OCI-LY7 (cell line): ENCODE measurements at regions of chr11 and their contacts with region 1.

Region 1: DNA sequence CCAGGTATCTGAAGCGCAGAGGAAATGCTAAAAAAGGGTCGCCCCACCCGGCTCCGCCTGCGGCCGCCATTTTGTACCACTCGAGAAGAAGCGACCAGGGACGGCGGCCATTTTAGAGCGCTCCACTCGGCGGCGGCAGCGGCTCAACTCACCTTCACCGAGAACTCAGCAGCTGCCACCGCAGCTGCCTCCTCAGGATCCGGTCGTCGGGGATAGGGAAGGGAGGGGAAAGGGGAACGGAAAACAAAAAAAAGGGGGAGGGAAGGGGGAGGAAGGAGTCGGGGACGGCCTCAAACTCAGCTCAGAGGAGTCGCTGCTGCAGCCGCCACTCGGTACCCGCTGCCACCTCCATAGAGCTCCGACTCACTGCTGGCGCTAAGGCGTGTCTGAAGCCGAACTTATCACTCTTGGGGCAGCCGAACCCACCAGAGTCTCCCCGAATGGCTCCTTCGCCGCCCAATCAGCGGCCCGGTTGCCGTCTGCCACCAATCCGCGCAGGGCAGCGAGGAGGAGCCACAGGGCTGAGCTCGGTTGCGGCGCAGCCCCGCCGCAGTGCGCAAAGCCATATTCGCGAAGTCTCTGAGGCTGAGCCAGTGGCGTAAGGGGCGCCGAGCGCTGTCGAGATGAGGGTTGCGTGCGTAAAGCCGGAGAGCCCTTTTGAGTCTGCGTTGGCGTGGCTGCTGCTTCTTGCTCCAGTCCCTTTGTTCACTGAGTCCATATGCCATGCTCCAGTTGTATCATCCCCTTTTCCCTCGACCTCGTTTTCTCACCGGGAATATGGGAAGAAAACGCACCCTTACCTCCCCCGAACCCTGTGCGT is at the start of gene EIF4G2:
- DNase-seq: peak; percentile 98
- H3K4me3 ChIP-seq: peak within 1 kb of the TSS; percentile 94
- H3K27ac ChIP-seq: peak within 1 kb of the TSS; percentile 87
- H3K4me1 ChIP-seq: peaks cover 40% of the 10 kb centered on the region
- CTCF ChIP-seq: no peak
- total RNA-seq, gene EIF4G2: 312 and 317 TPM in 2 replicates

Region 2: DNA sequence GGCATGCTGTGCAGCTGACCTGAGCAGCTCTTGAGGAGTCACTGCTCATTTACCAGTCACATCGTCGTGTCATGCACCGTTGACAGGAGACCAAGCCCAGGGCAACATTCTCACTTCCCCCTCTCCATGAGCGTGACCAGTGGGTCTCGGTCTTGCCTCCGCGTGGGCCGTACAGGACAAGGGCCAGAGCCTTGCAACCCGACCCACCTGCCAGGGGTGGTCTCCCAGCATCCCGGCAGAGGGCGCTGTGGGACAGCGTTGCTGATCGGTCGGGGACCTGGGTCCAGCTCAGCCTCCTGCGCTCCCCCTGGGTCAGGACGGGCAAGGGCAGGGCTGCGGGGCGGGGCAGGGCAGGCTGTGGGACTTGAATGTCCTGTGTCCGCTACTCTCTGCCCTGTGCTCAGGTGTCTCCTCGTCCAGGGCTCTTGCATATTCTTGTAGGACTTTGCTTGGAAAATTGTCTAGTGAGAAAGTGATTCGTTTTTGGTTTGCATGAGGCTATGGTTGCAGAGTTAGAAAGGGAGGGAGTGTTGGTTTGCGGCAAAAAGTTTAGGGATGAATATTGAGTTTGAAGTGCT is 16.3 kb before region 1 on chr11:
- CTCF ChIA-PET with region 1: no interaction called
- POLR2A ChIA-PET with region 1: interaction called, 14 read pairs
- intact Hi-C with region 1: no loop called
- DNase-seq: peak; percentile 82
- H3K4me3 ChIP-seq: no peak overlapping the region
- H3K27ac ChIP-seq: no peak overlapping the region
- H3K4me1 ChIP-seq: no peaks in the 10 kb centered on the region
- CTCF ChIP-seq: peak; percentile 88

Region 3: DNA sequence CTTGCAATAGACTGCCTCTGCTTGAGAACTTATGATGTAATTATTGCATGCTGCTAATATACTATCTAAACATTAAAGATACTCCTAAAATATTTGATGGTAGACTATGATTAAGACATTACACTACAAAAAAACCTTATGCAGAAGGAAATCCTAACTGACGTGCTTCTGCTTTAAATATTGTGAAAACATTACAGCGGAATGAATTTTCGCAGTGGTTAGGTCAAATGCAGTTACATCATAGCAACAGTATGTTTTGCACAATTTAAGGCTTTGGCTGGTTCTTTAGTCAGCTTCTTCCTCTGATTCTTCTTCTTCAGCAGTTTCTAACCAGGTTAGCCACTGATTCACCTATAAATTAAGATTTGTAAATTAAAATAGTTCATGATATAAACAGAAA is 11.2 kb before region 1 on chr11:
- CTCF ChIA-PET with region 1: no interaction called
- POLR2A ChIA-PET with region 1: interaction called, 22 read pairs
- intact Hi-C with region 1: no loop called
- DNase-seq: no peak
- H3K4me3 ChIP-seq: no peak overlapping the region
- H3K27ac ChIP-seq: no peak overlapping the region
- H3K4me1 ChIP-seq: no peaks in the 10 kb centered on the region
- CTCF ChIP-seq: no peak

Region 4: GRCh38 chr11:10824888-10825287 is 16.1 kb after region 1 on chr11:
- CTCF ChIA-PET with region 1: interaction called, 4 read pairs
- POLR2A ChIA-PET with region 1: interaction called, 25 read pairs
- intact Hi-C with region 1: no loop called
- DNase-seq: peak; percentile 48
- H3K4me3 ChIP-seq: no peak overlapping the region
- H3K27ac ChIP-seq: no peak overlapping the region
- H3K4me1 ChIP-seq: peaks cover 9% of the 10 kb centered on the region
- CTCF ChIP-seq: no peak

Region 5: DNA sequence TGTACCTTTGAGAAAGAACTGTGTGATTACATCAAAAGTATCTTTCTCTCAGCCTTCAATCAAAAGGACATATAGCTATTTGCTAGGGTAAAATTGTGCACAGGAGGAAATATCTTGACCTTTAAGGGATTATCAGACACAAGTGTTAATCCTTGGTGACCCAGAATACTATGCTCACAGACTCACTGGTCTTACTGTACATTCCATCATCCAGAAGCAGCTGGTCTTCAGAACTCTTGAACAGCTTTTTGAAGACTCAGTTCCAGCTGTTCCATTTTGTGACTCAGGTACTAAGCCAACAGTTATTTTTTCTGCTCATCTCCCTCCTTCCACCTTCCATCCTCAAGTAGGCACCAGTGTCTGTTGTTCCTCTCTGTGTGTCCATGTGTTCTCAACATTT is 29.3 kb after region 1 on chr11:
- CTCF ChIA-PET with region 1: no interaction called
- POLR2A ChIA-PET with region 1: interaction called, 17 read pairs
- intact Hi-C with region 1: no loop called
- DNase-seq: no peak
- H3K4me3 ChIP-seq: no peak overlapping the region
- H3K27ac ChIP-seq: no peak overlapping the region
- H3K4me1 ChIP-seq: peaks cover 5% of the 10 kb centered on the region
- CTCF ChIP-seq: no peak

Region 6: DNA sequence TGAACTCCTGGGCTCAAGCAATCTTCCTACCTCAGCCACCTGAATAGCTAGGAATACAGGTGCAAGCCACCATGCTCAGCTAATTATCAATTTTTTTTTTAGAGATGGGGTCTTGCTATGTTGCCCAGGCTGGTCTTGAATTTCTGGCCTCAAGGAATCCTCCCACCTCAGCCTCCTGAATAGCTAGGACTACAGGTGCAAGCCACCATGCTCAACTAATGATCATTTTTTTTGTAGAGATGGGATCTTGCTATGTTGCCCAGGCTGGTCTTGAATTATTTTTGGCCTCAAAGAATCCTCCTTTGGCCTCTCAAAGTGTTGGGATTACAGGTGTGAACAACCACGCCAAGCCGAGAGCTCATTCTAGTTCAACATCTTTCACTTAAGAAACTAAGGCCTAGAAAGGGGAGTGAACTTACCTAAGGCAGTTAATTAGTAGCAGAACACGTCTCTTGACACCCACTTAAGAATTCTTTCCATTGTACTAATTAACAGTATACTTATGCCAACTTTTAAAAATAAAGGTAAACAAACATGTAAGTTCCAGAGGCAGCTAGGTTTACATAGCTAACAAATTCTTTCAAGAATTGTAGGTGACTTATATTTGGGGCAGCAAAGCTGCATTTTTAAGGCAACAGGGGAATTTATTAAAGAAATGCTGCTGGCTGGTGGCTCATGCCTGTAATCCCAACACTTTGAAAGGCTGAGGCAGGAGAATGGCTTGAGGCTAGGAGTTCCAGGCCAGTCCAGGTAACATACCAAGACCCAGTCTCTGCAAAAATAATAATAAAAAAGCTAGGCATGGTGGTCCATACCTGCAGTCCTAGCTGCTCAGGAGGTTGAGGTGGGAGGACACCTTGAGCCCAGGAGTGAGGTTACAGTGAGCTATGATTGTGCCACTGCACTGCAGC is 39.5 kb after region 1 on chr11:
- CTCF ChIA-PET with region 1: interaction called, 3 read pairs
- POLR2A ChIA-PET with region 1: interaction called, 15 read pairs
- intact Hi-C with region 1: no loop called
- DNase-seq: no peak
- H3K4me3 ChIP-seq: no peak overlapping the region
- H3K27ac ChIP-seq: no peak overlapping the region
- H3K4me1 ChIP-seq: no peaks in the 10 kb centered on the region
- CTCF ChIP-seq: no peak

Region 7: DNA sequence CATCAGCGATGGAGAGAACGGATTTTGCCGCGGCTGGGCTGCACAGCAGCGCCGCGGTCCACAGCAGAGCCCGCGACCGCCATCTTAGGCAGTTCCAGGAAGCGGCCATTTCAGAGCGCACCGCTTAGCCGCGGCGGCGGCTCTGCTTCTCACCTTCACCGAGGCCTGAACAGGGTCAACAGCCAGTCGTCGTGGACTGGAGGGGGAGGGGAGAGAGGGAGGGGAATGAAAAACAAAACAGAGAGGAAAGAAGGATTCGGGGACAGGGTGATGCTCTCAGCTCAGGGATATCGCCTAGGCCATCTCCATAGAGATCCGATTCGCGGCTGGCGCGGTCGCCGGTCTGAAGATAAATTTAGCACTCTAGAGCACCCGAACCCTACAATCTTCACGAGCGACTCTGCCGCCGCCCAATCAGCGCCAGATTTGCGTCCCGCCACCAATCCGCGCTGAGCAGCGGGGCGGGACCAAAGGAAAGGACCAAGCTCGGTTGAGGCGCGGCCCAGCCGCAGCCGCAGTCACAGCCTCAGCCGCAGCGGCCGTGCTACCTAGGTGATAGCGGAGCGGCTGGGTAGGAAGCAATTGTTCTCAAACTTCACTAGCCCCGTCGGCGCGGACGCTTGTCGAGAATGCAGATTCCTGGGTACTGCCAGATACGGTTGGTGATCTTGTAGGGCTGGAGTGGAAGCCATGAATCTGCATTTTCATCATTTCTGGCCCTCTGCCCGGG is 49.1 kb after region 1 on chr11 and contains the start of gene ZBED5:
- CTCF ChIA-PET with region 1: interaction called, 6 read pairs
- POLR2A ChIA-PET with region 1: interaction called, 63 read pairs
- intact Hi-C with region 1: loop called (anchors 1 kb)
- DNase-seq: peak; percentile 97
- H3K4me3 ChIP-seq: peak within 1 kb of the TSS; percentile 85
- H3K27ac ChIP-seq: peak within 1 kb of the TSS; percentile 81
- H3K4me1 ChIP-seq: peaks cover 22% of the 10 kb centered on the region
- CTCF ChIP-seq: no peak
- total RNA-seq, gene ZBED5: 37.6 and 42.1 TPM in 2 replicates

Region 8: DNA sequence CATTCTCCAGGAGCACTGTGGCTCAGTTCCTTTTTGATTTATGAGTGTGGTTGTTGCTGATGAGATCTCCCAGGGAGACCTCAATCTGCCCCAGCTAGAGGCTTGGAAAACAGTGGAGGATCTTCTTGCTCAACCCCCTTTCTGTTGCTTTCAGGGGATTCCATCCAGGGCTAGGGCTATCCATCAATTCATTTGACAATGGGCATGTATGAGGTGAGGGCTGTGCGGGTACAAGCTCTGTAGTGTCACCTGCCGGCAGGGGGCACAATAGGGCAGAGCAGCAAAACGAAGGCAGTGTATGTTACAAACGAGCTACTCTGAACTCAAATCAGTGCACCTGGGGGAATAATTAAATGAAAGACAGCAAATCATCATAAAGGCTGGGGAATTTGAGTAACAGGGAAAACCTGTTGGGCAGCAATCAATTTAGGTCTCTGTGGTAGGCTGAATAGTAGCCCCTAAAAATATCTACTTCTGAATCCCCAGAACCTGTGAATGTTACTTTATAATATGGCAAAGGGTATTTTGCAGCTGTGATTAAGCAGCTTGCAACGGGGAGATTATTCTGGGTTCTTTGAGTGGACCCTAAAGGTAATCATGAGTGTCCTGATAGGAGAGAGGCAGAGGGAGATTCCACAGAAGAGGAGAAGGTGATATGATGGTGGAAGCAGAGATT is 219.4 kb after region 1 on chr11:
- CTCF ChIA-PET with region 1: no interaction called
- POLR2A ChIA-PET with region 1: no interaction called
- intact Hi-C with region 1: no loop called
- DNase-seq: peak; percentile 65
- H3K4me3 ChIP-seq: no peak overlapping the region
- H3K27ac ChIP-seq: no peak overlapping the region
- H3K4me1 ChIP-seq: no peaks in the 10 kb centered on the region
- CTCF ChIP-seq: peak; percentile 96